GM12878 (cell line): ENCODE measurements at regions of chr2 and their contacts with region 1.

Region 1: DNA sequence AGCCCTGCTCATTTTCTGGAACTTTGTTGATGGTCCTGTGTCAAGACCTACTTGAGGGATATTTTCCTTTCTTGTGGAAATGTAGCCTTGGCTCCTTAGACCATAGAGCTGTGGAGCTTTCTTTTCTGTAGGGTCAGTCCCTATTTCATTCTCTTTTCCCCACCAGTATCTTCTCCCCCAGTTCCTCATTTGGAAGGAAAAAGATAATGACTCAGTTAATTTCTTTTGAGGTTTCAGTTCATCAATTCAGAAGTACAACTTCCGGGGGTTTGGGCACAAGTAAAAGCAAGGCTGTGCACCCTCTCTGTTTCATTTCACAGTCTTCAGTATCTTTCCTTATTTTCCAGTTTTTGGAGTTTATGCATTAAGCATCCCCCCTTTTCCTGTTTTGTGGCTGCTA is 70.7 kb downstream of the CDC42EP3 start:
- DNase-seq: no peak
- ATAC-seq: peak; percentile 91
- H3K4me3 ChIP-seq: peak overlapping the region; percentile 23; the same call in 1 of the 2 replicates
- H3K27ac ChIP-seq: peak overlapping the region; percentile 48; the same call in 1 of the 2 replicates
- H3K4me1 ChIP-seq: peaks cover 31% of the 10 kb centered on the region
- H3K27me3 ChIP-seq: no peaks in the 10 kb centered on the region
- CTCF ChIP-seq: no peak
- EP300 ChIP-seq: peak in 1 of 2 experiments; percentile 52; a peak in 1 of 4 replicates
- POLR2A ChIP-seq: no peak
- RAD21 ChIP-seq: no peak

Region 2: GRCh38 chr2:37500031-37500430 is 100.7 kb before region 1 on chr2:
- CTCF ChIA-PET with region 1: no interaction called
- POLR2A ChIA-PET with region 1: no interaction called
- RAD21 ChIA-PET with region 1: no interaction called
- SMC1A ChIA-PET with region 1: no interaction called
- in situ Hi-C with region 1: no loop called
- intact Hi-C with region 1: no loop called
- DNase-seq: no peak
- ATAC-seq: no peak; the same call in 1 of the 3 replicates
- H3K4me3 ChIP-seq: no peak overlapping the region
- H3K27ac ChIP-seq: no peak overlapping the region
- H3K4me1 ChIP-seq: no peaks in the 10 kb centered on the region
- H3K27me3 ChIP-seq: no peaks in the 10 kb centered on the region
- CTCF ChIP-seq: no peak
- EP300 ChIP-seq: no peak
- POLR2A ChIP-seq: no peak
- RAD21 ChIP-seq: no peak

Region 3: DNA sequence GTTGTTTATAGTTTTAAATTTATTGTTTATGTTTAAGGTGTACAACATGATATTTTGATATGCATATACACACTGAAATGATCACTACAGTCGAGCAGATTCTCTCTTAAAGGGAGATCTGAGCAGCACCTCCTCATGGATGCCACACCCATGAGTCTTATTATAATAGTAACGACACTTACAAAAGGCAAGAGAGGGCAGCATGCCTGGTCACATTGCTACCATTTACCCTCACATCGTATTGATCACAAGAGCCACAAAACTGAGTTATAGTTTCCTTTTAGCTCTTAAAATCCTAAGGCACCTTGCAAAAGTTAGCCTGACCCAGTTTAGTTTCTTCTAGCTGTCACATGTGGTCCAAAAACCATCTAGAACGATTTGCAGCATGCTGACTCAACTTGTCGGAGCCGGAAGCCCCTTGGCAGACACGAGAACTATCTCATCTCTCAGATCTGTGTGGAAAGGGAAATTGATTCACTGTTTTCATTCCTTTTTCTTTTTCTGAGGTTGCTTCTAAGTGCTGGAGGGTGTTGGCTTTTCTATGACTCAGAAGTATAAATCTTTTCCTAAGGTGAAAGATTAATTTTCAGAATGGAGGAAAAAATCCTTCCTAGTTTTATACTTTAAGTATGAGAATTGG is 14.6 kb before region 1 on chr2:
- CTCF ChIA-PET with region 1: interaction called, 23 read pairs
- POLR2A ChIA-PET with region 1: interaction called, 8 read pairs
- RAD21 ChIA-PET with region 1: interaction called, 36 read pairs
- SMC1A ChIA-PET with region 1: interaction called, 86 read pairs
- in situ Hi-C with region 1: no loop called
- intact Hi-C with region 1: no loop called
- DNase-seq: peak; percentile 68
- ATAC-seq: peak; percentile 58
- H3K4me3 ChIP-seq: no peak overlapping the region
- H3K27ac ChIP-seq: peak overlapping the region; percentile 61
- H3K4me1 ChIP-seq: peaks cover 42% of the 10 kb centered on the region
- H3K27me3 ChIP-seq: no peaks in the 10 kb centered on the region
- CTCF ChIP-seq: no peak
- EP300 ChIP-seq: no peak
- POLR2A ChIP-seq: no peak
- RAD21 ChIP-seq: no peak